CD14-positive monocyte (primary cell): ENCODE measurements at regions of chr10 and their contacts with region 1.

Region 1: DNA sequence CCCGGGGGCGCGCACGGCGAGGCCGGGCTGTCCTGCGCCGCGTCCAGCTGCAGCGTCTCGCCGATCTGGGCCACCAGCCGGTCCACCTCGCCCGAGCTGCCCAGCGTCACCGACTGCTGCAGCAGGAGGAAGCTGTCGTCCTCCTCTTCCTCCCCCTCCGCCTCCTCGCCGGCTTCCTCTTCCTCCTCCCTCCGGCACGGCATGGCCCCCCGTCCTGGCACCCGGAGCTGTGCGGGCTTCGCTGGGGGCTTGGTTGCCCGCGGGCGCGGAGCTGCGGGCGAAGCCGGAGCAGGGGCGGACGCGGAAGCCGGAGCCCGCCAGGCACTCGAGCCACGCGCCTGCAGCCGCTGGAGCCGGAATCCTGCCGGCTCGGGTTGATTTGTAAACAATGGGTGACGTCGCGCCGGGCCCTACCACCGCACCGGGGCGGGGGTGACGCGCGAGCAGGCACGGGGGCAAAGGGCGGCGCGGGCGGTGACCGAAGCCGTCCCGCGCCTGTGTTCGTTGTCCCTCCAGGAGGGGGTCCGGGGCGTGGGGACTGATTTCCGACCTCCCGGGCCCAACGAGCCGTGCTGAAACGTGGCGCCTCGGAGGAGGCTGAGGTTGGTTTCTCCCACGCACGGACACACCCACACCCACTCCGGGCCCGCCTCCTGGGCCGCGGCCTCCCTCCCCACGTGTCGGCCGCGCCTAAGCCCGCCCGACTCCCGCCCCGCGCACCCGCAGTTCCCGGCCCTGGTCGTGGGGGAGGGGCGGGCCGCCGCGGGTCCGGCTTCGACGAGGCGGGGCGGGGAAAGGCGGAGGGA is at the start of gene FRAT2:
- DNase-seq: peak; percentile 81 to 92 (median 90)
- H3K4me3 ChIP-seq: peak within 1 kb of the TSS; percentile 87 to 99 (median 90)
- H3K4me3 Mint-ChIP-seq: peak within 1 kb of the TSS; percentile 98 to 99
- H3K27ac ChIP-seq: peak within 1 kb of the TSS; percentile 85 to 92
- H3K27ac Mint-ChIP-seq: peak within 1 kb of the TSS; percentile 95 to 99 (median 97)
- H3K4me1 ChIP-seq: peaks cover 46 to 65% of the 10 kb centered on the region in 2 donors
- H3K4me1 Mint-ChIP-seq: peaks cover 67% of the 10 kb centered on the region
- H3K27me3 ChIP-seq: no peaks in the 10 kb centered on the region
- H3K27me3 Mint-ChIP-seq: peaks cover 0 to 2% (median 0%) of the 10 kb centered on the region in 3 donors
- CTCF ChIP-seq: no peak
- polyA plus RNA-seq, gene FRAT2: 29.4 to 62.4 (median 37.9) TPM

Region 2: GRCh38 chr10:97250952-97251351 is 83.6 kb before region 1 on chr10:
- intact Hi-C with region 1: no loop called
- DNase-seq: no peak
- H3K4me3 ChIP-seq: no peak overlapping the region
- H3K4me3 Mint-ChIP-seq: no peak overlapping the region
- H3K27ac ChIP-seq: no peak overlapping the region
- H3K27ac Mint-ChIP-seq: peak overlapping the region in 3 of 7 donors; percentile 13 to 78 (median 32)
- H3K4me1 ChIP-seq: no peaks in the 10 kb centered on the region
- H3K4me1 Mint-ChIP-seq: peaks cover under 1% of the 10 kb centered on the region
- H3K27me3 ChIP-seq: no peaks in the 10 kb centered on the region
- H3K27me3 Mint-ChIP-seq: peaks cover 0 to 5% (median 0%) of the 10 kb centered on the region in 3 donors
- CTCF ChIP-seq: no peak

Region 3: GRCh38 chr10:97278491-97278989 is 56.0 kb before region 1 on chr10:
- intact Hi-C with region 1: loop called in 1 of 2 experiments (anchors 5 kb)
- DNase-seq: peak; percentile 27 to 63 (median 54)
- H3K4me3 ChIP-seq: no peak overlapping the region
- H3K4me3 Mint-ChIP-seq: no peak overlapping the region
- H3K27ac ChIP-seq: peak overlapping the region in 1 of 2 donors; percentile 79
- H3K27ac Mint-ChIP-seq: peak overlapping the region; percentile 68 to 90 (median 75)
- H3K4me1 ChIP-seq: peaks cover 21 to 27% of the 10 kb centered on the region in 2 donors
- H3K4me1 Mint-ChIP-seq: peaks cover 34% of the 10 kb centered on the region
- H3K27me3 ChIP-seq: no peaks in the 10 kb centered on the region
- H3K27me3 Mint-ChIP-seq: peaks cover 0 to 2% (median 0%) of the 10 kb centered on the region in 3 donors
- CTCF ChIP-seq: peak; percentile 75

Region 4: GRCh38 chr10:97292097-97292862 is 42.3 kb before region 1 on chr10 and contains the start of gene ARHGAP19:
- intact Hi-C with region 1: loop called (anchors 2 to 5 kb)
- DNase-seq: peak; percentile 96 to 98 (median 97)
- H3K4me3 ChIP-seq: peak within 1 kb of the TSS; percentile 72 to 96 (median 92)
- H3K4me3 Mint-ChIP-seq: peak within 1 kb of the TSS; percentile 89 to 96
- H3K27ac ChIP-seq: peak within 1 kb of the TSS; percentile 77 to 85
- H3K27ac Mint-ChIP-seq: peak within 1 kb of the TSS; percentile 86 to 94 (median 92)
- H3K4me1 ChIP-seq: peaks cover 11 to 12% of the 10 kb centered on the region in 2 donors
- H3K4me1 Mint-ChIP-seq: peaks cover 20% of the 10 kb centered on the region
- H3K27me3 ChIP-seq: no peaks in the 10 kb centered on the region
- H3K27me3 Mint-ChIP-seq: peaks cover 1 to 2% (median 2%) of the 10 kb centered on the region in 3 donors
- CTCF ChIP-seq: no peak
- polyA plus RNA-seq, gene ARHGAP19: 8.3 to 10.6 (median 10.2) TPM

Region 5: DNA sequence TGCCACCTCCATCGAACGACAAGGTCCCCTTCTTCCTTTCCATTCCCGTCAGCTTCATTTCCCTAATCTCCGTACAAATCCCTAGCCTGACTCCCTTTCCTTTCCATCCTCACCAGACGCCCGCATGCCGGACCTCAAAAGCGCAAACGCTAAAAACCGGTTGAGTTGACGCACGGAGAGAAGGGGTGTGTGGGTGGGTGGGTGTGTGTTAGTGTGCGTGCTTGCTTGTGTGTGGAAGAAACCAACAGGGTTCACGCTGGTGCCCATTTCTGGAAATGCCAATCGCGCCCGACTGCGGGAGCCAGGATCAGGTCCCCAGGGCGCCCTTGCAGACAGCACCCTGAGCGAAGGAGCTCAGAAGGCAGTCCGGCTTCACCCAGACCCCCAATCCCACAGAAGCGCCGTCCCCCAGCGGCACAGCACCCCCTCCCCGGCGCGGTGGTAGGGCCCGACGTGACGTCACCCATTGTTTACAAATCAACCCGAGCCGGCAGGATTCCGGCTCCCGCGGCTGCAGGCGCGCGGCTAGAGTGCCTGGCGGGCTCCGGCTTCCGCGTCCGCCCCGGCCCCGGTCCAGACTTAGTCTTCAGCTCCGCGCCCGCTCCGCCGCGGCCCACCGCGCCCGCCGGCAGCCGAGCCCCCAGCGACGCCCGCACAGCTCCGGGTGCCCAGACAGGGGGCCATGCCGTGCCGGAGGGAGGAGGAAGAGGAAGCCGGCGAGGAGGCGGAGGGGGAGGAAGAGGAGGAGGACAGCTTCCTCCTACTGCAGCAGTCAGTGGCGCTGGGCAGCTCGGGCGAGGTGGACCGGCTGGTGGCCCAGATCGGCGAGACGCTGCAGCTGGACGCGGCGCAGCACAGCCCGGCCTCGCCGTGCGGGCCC is 15.6 kb before region 1 on chr10 and contains the start of gene FRAT1:
- intact Hi-C with region 1: loop called (anchors 1 to 2 kb)
- DNase-seq: peak; percentile 83 to 92 (median 91)
- H3K4me3 ChIP-seq: peak within 1 kb of the TSS; percentile 88 to 100 (median 96)
- H3K4me3 Mint-ChIP-seq: peak within 1 kb of the TSS; percentile 97 to 100
- H3K27ac ChIP-seq: peak within 1 kb of the TSS; percentile 96 to 98
- H3K27ac Mint-ChIP-seq: peak within 1 kb of the TSS; percentile 99 to 100 (median 100)
- H3K4me1 ChIP-seq: peaks cover 51 to 62% of the 10 kb centered on the region in 2 donors
- H3K4me1 Mint-ChIP-seq: peaks cover 63% of the 10 kb centered on the region
- H3K27me3 ChIP-seq: no peaks in the 10 kb centered on the region
- H3K27me3 Mint-ChIP-seq: peaks cover 0 to 3% (median 2%) of the 10 kb centered on the region in 3 donors
- CTCF ChIP-seq: no peak
- polyA plus RNA-seq, gene FRAT1: 17.0 to 34.4 (median 31.2) TPM

Region 6: GRCh38 chr10:97365761-97366351 is 31.3 kb after region 1 on chr10:
- intact Hi-C with region 1: loop called in 1 of 2 experiments (anchors 5 kb)
- DNase-seq: peak; percentile 88 to 99 (median 95)
- H3K4me3 ChIP-seq: peak overlapping the region in 1 of 3 experiments; percentile 38
- H3K4me3 Mint-ChIP-seq: peak overlapping the region; percentile 30 to 54
- H3K27ac ChIP-seq: peak overlapping the region; percentile 91 to 100
- H3K27ac Mint-ChIP-seq: peak overlapping the region; percentile 96 to 99 (median 98)
- H3K4me1 ChIP-seq: peaks cover 96 to 100% of the 10 kb centered on the region in 2 donors
- H3K4me1 Mint-ChIP-seq: peaks cover 98% of the 10 kb centered on the region
- H3K27me3 ChIP-seq: no peaks in the 10 kb centered on the region
- H3K27me3 Mint-ChIP-seq: peaks cover under 1 to 3% (median 1%) of the 10 kb centered on the region in 3 donors
- CTCF ChIP-seq: no peak

Region 7: DNA sequence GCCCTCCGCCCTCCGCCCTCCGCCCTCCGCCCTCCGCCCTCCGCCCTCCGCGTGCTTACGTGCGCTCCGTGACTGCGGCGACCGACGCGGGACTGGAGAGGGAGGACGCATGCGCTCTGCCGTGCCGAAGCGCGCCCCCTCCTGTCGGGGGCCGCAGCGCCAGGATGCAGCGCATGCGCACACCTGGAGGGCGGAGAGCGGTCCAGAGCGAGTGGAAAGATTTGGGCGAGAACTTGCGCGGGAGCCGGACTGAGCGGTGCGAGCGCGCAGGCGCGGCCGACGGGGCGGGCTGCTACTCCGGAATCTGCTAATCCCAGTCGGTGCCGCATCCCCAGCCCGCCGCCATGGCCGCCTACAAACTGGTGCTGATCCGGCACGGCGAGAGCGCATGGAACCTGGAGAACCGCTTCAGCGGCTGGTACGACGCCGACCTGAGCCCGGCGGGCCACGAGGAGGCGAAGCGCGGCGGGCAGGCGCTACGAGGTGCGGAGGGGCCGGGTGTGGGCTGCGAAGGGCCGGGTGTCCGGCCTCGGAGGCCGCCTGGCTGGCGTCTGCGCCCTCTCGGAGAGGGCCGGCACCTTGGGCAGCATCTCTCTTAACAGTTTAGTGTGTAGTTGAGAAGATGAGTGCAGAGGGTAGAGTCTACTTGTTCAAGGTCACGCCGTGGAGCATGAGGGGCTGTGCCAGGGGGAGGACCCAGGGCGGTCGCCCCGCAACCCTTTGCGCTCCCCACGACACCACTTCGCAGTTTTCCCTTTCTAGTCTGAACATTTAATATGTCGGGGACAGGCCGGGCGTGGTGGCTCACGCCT is 91.6 kb after region 1 on chr10 and contains the start of gene PGAM1:
- intact Hi-C with region 1: loop called in 1 of 2 experiments (anchors 5 kb)
- DNase-seq: peak; percentile 96 to 99 (median 97)
- H3K4me3 ChIP-seq: peak within 1 kb of the TSS; percentile 80 to 96 (median 82)
- H3K4me3 Mint-ChIP-seq: peak within 1 kb of the TSS; percentile 85 to 90
- H3K27ac ChIP-seq: peak within 1 kb of the TSS; percentile 94 to 95
- H3K27ac Mint-ChIP-seq: peak within 1 kb of the TSS; percentile 92 to 99 (median 95)
- H3K4me1 ChIP-seq: peaks cover 75 to 80% of the 10 kb centered on the region in 2 donors
- H3K4me1 Mint-ChIP-seq: peaks cover 61% of the 10 kb centered on the region
- H3K27me3 ChIP-seq: no peaks in the 10 kb centered on the region
- H3K27me3 Mint-ChIP-seq: no peaks in the 10 kb centered on the region
- CTCF ChIP-seq: peak; percentile 65
- polyA plus RNA-seq, gene PGAM1: 276 to 749 (median 498) TPM